ENCODE measurements at regions of chr7 and their contacts with region 1.

Region 1: GRCh38 chr7:134570934-134571495 is 22.1 kb downstream of the AKR1B15 start:
- DNase-seq: no peak
- ATAC-seq: no peak
- H3K4me3 ChIP-seq: no peak overlapping the region
- H3K27ac ChIP-seq: no peak overlapping the region
- H3K4me1 ChIP-seq: no peaks in the 10 kb centered on the region
- H3K27me3 ChIP-seq: peaks cover 4 to 23% of the 10 kb centered on the region in 2 experiments; a peak in 3 of 5 replicates
- CTCF ChIP-seq: no peak
- EP300 ChIP-seq: no peak
- POLR2A ChIP-seq: no peak
- RAD21 ChIP-seq: no peak

Region 2: GRCh38 chr7:134388336-134389019 is 182.5 kb before region 1 on chr7:
- CTCF ChIA-PET with region 1: no interaction called
- POLR2A ChIA-PET with region 1: no interaction called
- in situ Hi-C with region 1: no loop called
- intact Hi-C with region 1: no loop called
- DNase-seq: no peak
- ATAC-seq: no peak
- H3K4me3 ChIP-seq: no peak overlapping the region
- H3K27ac ChIP-seq: no peak overlapping the region
- H3K4me1 ChIP-seq: no peaks in the 10 kb centered on the region
- H3K27me3 ChIP-seq: peaks cover 0 to 4% of the 10 kb centered on the region in 2 experiments; a peak in 2 of 5 replicates
- CTCF ChIP-seq: no peak
- EP300 ChIP-seq: no peak
- POLR2A ChIP-seq: no peak
- RAD21 ChIP-seq: no peak

Region 3: GRCh38 chr7:134535272-134535918 is 35.6 kb before region 1 on chr7:
- CTCF ChIA-PET with region 1: no interaction called
- POLR2A ChIA-PET with region 1: no interaction called
- in situ Hi-C with region 1: loop called (anchors 5 kb)
- intact Hi-C with region 1: no loop called
- DNase-seq: no peak
- ATAC-seq: no peak
- H3K4me3 ChIP-seq: no peak overlapping the region
- H3K27ac ChIP-seq: no peak overlapping the region
- H3K4me1 ChIP-seq: no peaks in the 10 kb centered on the region
- H3K27me3 ChIP-seq: peaks cover 10 to 38% of the 10 kb centered on the region in 2 experiments
- CTCF ChIP-seq: no peak
- EP300 ChIP-seq: no peak
- POLR2A ChIP-seq: no peak
- RAD21 ChIP-seq: no peak

Region 4: GRCh38 chr7:134613623-134614347 is 42.8 kb after region 1 on chr7:
- CTCF ChIA-PET with region 1: no interaction called
- POLR2A ChIA-PET with region 1: no interaction called
- in situ Hi-C with region 1: no loop called
- intact Hi-C with region 1: no loop called
- DNase-seq: no peak
- ATAC-seq: peak; percentile 64
- H3K4me3 ChIP-seq: no peak overlapping the region
- H3K27ac ChIP-seq: no peak overlapping the region
- H3K4me1 ChIP-seq: no peaks in the 10 kb centered on the region
- H3K27me3 ChIP-seq: peaks cover 3% of the 10 kb centered on the region in 2 experiments; a peak in 1 of 5 replicates
- CTCF ChIP-seq: no peak
- EP300 ChIP-seq: peak; percentile 54; the same call in 1 of the 2 replicates
- POLR2A ChIP-seq: no peak
- RAD21 ChIP-seq: no peak

Measured in K562 (cell line).